Left cardiac atrium (tissue), 4 donors: ENCODE measurements at regions of chr21 and their contacts with region 1.

Region 1: GRCh38 chr21:44892536-44893277 is 19.2 kb upstream of the PTTG1IP start:
- DNase-seq: peak; percentile 77
- ATAC-seq: peak; percentile 67 to 70

Region 2: DNA sequence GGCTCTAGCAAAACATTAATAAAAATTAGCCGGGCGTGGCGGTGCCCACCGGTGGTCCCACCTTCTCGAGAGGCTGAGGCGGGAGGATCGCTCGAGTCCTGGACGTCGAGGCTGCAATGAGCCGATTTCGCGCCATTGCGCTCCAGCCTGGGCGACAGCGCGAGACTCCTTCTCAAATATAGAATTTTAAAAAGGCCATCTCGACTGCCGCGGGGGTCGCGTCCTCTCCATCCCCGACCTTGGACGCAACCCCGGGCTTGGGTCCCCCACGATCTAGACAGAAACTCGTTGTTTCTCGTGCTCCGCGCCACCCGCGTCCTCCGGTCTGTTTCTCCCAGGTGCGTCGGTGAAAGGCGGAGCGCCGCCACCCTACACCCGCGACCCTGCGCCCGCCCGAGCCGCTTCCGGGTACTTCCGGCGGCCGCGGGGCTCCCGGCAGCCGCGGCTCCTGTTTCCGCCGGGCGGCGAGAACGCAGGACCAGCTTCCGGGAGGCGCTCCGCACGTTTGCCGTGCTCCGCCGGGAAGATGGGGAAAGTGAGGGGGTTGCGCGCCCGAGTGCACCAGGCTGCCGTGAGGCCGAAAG is 46.9 kb after region 1 on chr21 and contains the start of gene SLX9:
- intact Hi-C with region 1: loop called in 1 of 2 experiments (anchors 5 kb)
- DNase-seq: peak; percentile 81
- ATAC-seq: peak; percentile 96 to 97
- total RNA-seq, gene SLX9: 26.1 to 28.6 TPM

Region 3: DNA sequence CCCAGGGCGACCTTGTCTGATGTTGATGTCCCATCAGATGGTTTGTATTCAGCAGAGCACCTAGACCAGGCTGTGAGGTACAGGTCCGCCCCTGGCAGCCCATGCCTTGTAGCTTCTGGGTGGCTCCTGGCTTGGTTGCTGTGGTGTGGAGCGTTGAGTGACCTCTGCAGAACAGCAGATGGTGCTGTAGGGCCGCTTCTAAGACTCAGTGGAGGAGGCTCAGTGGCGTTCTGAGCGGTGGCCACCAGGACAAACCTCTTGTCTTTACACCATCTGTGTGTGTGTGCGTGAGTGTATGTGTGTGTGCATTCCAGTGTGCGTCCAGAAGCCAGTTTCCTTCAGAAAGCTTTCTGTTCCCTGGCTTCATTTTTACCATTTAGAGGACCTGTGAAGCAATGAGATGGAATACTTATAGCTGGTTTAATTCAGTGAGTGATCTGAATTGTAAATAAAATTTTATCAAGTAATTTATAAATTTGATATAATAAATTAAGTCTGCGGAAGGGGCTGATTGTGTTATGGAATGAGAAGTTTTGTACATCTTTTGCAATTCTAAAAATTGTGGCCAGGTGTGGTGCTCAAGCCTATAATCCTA is 247.7 kb after region 1 on chr21:
- intact Hi-C with region 1: loop called in 1 of 2 experiments (anchors 5 kb)
- DNase-seq: peak; percentile 79
- ATAC-seq: peak; percentile 83 to 87